Left colon (tissue), 2 donors: ENCODE measurements at regions of chr1 and their contacts with region 1.

Region 1: GRCh38 chr1:179867807-179868330 is 9.7 kb downstream of the TOR1AIP2 start:
- DNase-seq: peak in 1 of 2 donors; percentile 71
- ATAC-seq: peak; percentile 85

Region 2: DNA sequence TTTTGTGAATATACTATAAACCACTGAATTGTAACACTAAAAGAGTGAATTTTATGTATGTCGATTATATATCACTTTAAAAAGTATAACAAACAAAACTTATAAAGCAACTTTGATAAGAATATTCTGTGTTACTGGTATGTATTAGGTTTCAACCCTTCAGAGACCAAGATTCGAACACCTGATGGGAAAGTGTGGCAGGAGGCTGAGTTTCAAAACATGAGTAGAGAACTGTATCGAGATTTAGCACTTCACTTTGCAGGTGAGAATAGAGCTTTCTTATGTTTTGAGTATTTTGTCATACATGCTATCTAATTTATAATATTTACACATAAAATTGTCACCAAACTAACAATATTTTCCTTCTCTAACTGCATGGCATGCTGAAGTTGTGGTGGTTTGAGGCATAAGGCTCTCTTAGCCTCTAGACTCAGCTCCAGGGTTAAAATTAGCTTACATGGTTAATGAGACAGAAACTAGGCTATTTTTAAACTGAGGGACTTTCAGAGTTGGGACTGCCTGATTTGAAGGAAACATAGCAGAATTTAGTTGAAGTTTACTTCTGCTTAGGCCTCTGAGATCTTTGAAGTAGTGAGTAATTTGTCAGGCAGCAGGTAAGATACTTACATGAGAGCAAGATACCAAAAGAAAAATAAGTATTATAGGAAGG is 135.3 kb after region 1 on chr1:
- intact Hi-C with region 1: no loop called
- DNase-seq: no peak
- ATAC-seq: no peak

Region 3: DNA sequence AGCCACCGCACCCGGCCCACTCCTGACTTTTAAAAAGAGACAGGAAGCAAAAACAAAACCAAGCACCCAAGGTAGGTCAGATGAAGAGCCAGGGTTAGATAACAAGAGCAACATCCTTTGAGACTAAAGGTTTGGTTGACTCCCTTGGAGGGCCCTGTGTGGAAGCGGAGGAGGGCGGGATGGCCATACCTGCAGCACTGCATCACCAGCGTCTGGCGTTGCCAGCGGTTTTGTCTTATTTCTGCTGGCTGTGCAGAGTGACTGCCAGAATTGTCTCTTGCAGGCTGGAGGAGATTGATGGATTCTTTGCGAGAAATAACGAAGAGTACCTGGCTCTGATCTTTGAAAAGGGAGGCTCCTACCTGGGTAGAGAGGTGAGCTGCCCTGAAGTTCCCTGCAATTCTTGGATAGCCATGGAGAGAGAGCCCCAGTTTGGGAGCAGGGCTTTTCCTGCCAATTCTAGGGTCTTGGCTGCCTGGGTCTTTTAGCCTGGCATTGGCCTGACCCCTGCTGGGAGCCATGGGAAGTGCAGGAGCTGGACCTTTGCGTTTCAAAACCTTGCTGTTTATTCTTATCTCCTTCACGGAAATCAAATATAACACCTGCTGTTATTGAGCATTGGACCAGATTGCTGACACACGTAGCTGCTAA is 310.8 kb after region 1 on chr1:
- intact Hi-C with region 1: loop called in 1 of 2 experiments (anchors 5 kb)
- DNase-seq: peak in 1 of 2 donors; percentile 73
- ATAC-seq: peak; percentile 74